ENCODE measurements at regions of chr4 and their contacts with region 1.

Region 1: DNA sequence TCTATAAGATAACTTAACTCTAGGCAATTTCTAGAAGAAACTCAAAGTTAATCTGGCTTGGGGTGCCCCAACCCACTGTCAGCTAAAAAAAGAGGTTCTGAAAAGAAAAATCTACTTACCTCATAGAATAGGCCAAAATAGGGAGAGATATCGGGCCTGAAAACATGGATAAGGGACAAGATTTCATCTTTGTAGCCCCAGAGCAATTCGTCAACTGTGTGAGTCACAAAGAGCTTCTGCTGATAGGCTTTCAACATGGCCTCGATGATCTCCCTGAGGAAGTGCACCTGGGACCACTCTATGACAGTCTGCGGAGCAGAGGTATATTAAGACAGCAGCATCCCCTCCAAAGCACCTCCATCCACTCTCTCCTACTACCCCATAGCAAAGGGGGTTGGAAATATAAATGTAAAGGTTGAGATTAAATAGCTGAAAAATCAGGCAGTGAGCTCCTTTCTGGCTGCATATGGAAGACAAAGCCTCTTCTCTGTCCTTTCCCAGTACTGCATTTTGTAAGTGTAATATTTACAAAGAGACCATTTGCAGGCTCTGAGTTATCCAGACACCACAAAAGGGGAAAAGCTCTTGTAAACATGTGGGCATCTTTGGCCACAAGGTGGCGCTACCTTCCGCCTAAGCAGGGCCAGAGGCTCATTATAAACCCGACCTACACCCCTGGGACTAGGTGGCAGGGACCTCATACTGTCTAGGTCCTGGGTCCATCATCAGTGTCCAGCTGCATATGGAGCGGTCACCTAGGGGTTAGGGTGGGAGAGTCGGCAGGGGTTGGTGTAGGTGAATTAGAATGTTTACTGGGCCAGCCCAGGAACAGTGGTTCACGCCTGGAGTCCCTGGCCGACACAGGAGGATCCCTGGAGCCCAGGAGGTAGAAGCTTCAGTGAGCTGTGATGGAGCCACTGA is 31.5 kb upstream of the NUP54 start:
- DNase-seq: peak; percentile 82 to 83
- ATAC-seq: peak; percentile 80 to 92 (median 87)
- H3K4me3 ChIP-seq: no peak overlapping the region
- H3K27ac ChIP-seq: peak overlapping the region in 2 of 10 donors; percentile 32 to 55
- H3K4me1 ChIP-seq: peaks cover 0 to 39% (median 30%) of the 10 kb centered on the region in 9 donors
- H3K27me3 ChIP-seq: no peaks in the 10 kb centered on the region
- CTCF ChIP-seq: peak; percentile 87 to 97 (median 93)

Region 2: DNA sequence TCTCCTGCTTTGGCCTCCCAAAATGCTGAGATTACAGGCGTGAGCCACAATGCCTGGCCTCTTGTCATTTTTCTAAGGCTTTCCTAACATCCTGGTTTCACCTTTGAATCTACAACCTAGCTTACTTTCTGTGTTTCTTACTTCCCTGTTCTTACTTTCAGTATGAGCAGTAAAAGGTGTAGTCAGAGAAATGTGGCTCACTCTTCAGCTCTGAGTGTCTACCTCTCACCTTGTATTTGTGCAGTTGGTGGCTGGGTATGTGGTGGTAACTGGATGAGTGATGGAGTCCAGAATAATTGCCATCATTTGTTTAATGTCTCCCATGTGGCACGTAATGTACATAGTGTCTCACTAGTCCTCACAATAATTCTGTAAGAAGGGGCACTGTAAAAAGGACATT is 124.6 kb before region 1 on chr4:
- intact Hi-C with region 1: no loop called
- DNase-seq: no peak
- ATAC-seq: no peak
- H3K4me3 ChIP-seq: no peak overlapping the region
- H3K27ac ChIP-seq: no peak overlapping the region
- H3K4me1 ChIP-seq: peaks cover 0 to 8% (median 0%) of the 10 kb centered on the region in 9 donors
- H3K27me3 ChIP-seq: peaks cover 0 to 20% (median 0%) of the 10 kb centered on the region in 7 donors
- CTCF ChIP-seq: no peak

Region 3: GRCh38 chr4:76213415-76214176 is 33.9 kb after region 1 on chr4 and contains the start of gene SCARB2:
- intact Hi-C with region 1: loop called in 1 of 10 experiments (anchors 2 kb)
- DNase-seq: peak; percentile 88 to 92
- ATAC-seq: peak; percentile 92 to 97 (median 96)
- H3K4me3 ChIP-seq: peak within 1 kb of the TSS; percentile 50 to 95 (median 84)
- H3K27ac ChIP-seq: peak within 1 kb of the TSS; percentile 93 to 98 (median 96)
- H3K4me1 ChIP-seq: peaks cover 16 to 77% (median 54%) of the 10 kb centered on the region in 9 donors
- H3K27me3 ChIP-seq: no peaks in the 10 kb centered on the region
- CTCF ChIP-seq: no peak
- total RNA-seq, gene SCARB2: 76.6 to 199 (median 94.9) TPM

Region 4: GRCh38 chr4:76251441-76252270 is 72.0 kb after region 1 on chr4 and contains the start of gene FAM47E:
- intact Hi-C with region 1: loop called in 5 of 10 experiments (anchors 5 to 10 kb)
- DNase-seq: peak; percentile 72 to 78
- ATAC-seq: peak; percentile 95 to 99 (median 98)
- H3K4me3 ChIP-seq: peak within 1 kb of the TSS; percentile 16 to 77 (median 66)
- H3K27ac ChIP-seq: peak within 1 kb of the TSS in 6 of 10 donors; percentile 1 to 54 (median 46)
- H3K4me1 ChIP-seq: peaks cover 0 to 15% (median 7%) of the 10 kb centered on the region in 9 donors
- H3K27me3 ChIP-seq: peaks cover 0 to 62% (median 17%) of the 10 kb centered on the region in 7 donors
- CTCF ChIP-seq: peak in 8 of 9 donors; percentile 24 to 61 (median 47)
- total RNA-seq, gene FAM47E: 2.1 to 6.3 (median 3.1) TPM

Region 5: DNA sequence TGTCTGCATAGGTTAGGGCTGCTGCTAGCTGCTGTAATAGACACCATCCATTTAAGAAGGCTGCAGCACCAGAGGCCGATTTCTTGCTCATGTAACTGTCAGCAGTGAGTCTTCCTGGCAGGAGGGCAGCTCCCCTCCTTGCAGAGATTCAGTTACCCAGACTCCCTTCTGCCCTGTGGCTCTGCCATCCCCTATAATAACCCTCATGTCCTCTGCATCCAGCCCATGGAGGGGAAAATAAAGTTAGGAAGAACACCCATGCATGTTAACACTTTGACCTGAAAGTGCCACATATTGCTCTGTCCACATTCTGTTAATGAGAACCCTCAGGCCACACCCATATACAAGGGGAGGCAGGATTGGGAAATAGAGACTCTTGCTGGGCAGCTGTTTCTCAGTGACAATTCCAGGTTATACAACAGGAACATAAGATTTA is 132.3 kb after region 1 on chr4:
- intact Hi-C with region 1: loop called in 6 of 10 experiments (anchors 2 to 5 kb)
- DNase-seq: no peak
- ATAC-seq: no peak
- H3K4me3 ChIP-seq: no peak overlapping the region
- H3K27ac ChIP-seq: no peak overlapping the region
- H3K4me1 ChIP-seq: peaks cover 0 to 37% (median 17%) of the 10 kb centered on the region in 9 donors
- H3K27me3 ChIP-seq: no peaks in the 10 kb centered on the region
- CTCF ChIP-seq: no peak

Region 6: GRCh38 chr4:76420762-76421581 is 241.3 kb after region 1 on chr4 and contains the start of gene CCDC158:
- intact Hi-C with region 1: loop called in 3 of 10 experiments (anchors 5 kb)
- DNase-seq: peak; percentile 5 to 33
- ATAC-seq: peak; percentile 58 to 91 (median 80)
- H3K4me3 ChIP-seq: peak within 1 kb of the TSS; percentile 35 to 67 (median 56)
- H3K27ac ChIP-seq: peak within 1 kb of the TSS in 2 of 10 donors; percentile 10 to 22
- H3K4me1 ChIP-seq: peaks cover 0 to 12% (median under 1%) of the 10 kb centered on the region in 9 donors
- H3K27me3 ChIP-seq: peaks cover 0 to 18% (median 0%) of the 10 kb centered on the region in 7 donors
- CTCF ChIP-seq: no peak
- total RNA-seq, gene CCDC158: 0.15 to 1.0 (median 0.39) TPM

Region 7: DNA sequence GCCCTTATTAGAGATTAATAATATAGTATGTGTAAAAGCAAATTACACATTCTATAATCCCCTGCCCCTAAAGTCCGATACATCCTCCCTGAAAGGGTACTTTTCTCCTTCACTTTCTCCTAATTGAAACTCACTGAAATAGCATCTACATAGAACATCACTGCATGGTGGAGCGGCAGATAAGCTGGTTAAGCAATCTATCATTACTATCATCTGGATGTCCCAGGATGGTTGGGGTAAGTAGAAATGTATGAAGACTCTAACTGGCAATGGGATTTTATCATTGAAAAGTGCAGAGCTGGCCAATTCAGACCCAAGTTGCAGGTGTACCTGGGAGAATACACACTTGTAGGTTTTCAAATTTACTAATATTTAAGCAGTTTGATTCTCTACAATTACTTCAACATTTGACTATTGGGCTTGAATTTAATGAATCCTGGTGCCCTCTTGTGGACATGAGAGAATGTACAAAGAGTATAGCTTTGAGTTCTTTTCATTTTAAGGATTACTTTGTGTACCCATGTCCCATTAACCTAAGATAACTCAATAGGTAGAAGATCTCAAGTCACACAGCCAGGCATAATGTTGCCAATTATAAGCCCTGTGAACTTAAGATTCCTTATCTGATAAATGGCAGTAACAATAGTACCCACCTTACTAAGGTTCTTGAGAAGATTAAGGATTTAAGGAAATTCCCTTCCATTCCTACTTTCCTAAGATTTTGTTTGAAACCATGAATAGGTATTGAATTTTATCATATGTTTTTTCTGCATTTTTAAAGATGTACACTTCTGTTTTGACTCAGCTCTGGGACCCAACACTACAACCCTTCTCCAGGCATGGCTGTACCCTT is 325.2 kb after region 1 on chr4:
- intact Hi-C with region 1: loop called in 9 of 10 experiments (anchors 5 to 10 kb)
- DNase-seq: no peak
- ATAC-seq: peak in 4 of 8 donors; percentile 33 to 63 (median 52)
- H3K4me3 ChIP-seq: no peak overlapping the region
- H3K27ac ChIP-seq: no peak overlapping the region
- H3K4me1 ChIP-seq: no peaks in the 10 kb centered on the region
- H3K27me3 ChIP-seq: peaks cover 0 to 5% (median 0%) of the 10 kb centered on the region in 7 donors
- CTCF ChIP-seq: peak; percentile 32 to 79 (median 71)

Measured in heart right ventricle (tissue), 16 donors.